Head of caudate nucleus (tissue), 42 donors: ENCODE measurements at regions of chr5 and their contacts with region 1.

Region 1: GRCh38 chr5:159444441-159445082 is 114.3 kb upstream of the IL12B start:
- DNase-seq: peak in 8 of 42 donors; percentile 19 to 54 (median 34)

Region 2: GRCh38 chr5:159915904-159916840 is 471.6 kb after region 1 on chr5 and contains the start of gene ADRA1B:
- intact Hi-C with region 1: loop called (anchors 10 kb)
- DNase-seq: peak; percentile 22 to 85 (median 65)

Region 3: GRCh38 chr5:159982421-159983173 is 538.0 kb after region 1 on chr5:
- intact Hi-C with region 1: loop called (anchors 5 kb)
- DNase-seq: no peak